ENCODE measurements at regions of chr17 and their contacts with region 1.

Region 1: DNA sequence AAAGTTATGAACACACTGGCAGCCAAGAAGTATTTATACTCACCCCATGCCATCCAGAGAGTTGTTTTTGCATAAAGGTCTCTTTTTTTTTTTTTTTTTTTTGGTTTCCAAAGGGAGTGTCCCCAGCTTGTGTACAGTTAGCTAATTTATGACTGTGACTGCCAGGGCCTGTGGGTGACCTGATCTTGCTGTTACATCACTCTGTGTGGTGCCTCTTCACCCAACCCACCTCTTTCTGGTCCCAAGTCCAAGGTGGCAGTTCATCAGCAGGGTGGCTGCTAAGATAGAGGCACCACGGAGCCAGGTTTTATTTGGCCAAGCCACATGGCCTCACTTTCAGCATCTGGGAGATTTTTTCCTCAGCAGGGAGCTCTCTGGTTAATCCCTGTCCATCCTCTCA is at the start of gene NOS2:
- DNase-seq: no peak
- CTCF ChIP-seq: no peak

Region 2: GRCh38 chr17:27868576-27868975 is 68.1 kb after region 1 on chr17:
- in situ Hi-C with region 1: loop called (anchors 5 kb)
- DNase-seq: no peak
- CTCF ChIP-seq: no peak